ENCODE measurements at regions of chr11 and their contacts with region 1.

Region 1: GRCh38 chr11:70202898-70203748 is at the start of gene FADD:
- DNase-seq: peak; percentile 95
- H3K4me3 Mint-ChIP-seq: peak within 1 kb of the TSS; percentile 96
- H3K27ac Mint-ChIP-seq: peak within 1 kb of the TSS; percentile 99
- H3K4me1 Mint-ChIP-seq: peaks cover 37% of the 10 kb centered on the region
- H3K27me3 Mint-ChIP-seq: peaks cover 2% of the 10 kb centered on the region
- total RNA-seq, gene FADD: 31.8 to 33.9 TPM

Region 2: DNA sequence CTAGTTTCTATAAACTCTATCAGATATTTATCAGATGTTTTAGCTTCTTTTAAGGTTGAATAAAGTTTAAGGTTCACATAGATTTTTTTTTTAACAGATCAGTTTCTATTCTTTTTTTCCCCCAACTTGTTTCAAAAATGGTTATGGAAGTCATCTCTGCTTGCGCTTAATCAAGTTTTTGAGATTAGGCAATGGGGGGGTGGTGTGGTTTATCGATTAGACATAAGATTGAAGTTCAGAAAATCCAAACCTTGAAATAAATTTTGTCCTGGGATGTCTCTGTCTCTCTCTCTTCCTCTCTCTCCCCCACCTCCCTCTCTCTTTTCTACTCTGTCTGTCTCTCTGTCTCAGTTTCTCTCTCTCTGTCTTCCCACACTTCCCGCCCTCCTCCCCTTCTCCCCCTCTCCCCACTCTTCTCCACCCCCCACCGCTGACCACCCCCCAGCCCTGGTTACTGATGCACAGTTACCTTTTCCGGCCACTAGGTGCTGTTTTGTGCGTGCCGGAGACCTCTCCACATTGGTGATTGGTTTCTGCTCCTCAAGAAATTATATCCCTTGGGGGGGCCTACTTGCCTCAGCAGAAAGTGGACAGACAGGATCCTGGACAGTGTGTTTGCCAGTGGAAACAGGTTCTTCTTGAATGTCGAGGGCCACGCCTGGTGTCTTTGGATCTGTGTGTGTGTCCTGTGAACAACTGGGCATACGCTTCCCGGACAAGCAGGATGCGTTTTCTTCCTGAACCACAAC is 154.7 kb before region 1 on chr11:
- CTCF ChIA-PET with region 1: no interaction called
- POLR2A ChIA-PET with region 1: no interaction called
- intact Hi-C with region 1: no loop called
- DNase-seq: no peak
- H3K4me3 Mint-ChIP-seq: no peak overlapping the region
- H3K27ac Mint-ChIP-seq: no peak overlapping the region
- H3K4me1 Mint-ChIP-seq: no peaks in the 10 kb centered on the region
- H3K27me3 Mint-ChIP-seq: peaks cover 35% of the 10 kb centered on the region

Region 3: GRCh38 chr11:70141486-70142220 is 61.5 kb before region 1 on chr11:
- CTCF ChIA-PET with region 1: no interaction called
- POLR2A ChIA-PET with region 1: no interaction called
- intact Hi-C with region 1: no loop called
- DNase-seq: peak; percentile 26
- H3K4me3 Mint-ChIP-seq: no peak overlapping the region
- H3K27ac Mint-ChIP-seq: no peak overlapping the region
- H3K4me1 Mint-ChIP-seq: no peaks in the 10 kb centered on the region
- H3K27me3 Mint-ChIP-seq: peaks cover 30% of the 10 kb centered on the region

Region 4: GRCh38 chr11:70270104-70270876 is 67.2 kb after region 1 on chr11 and contains the start of gene PPFIA1:
- CTCF ChIA-PET with region 1: interaction called, 7 read pairs
- POLR2A ChIA-PET with region 1: interaction called, 4 read pairs
- intact Hi-C with region 1: loop called (anchors 1 kb)
- DNase-seq: peak; percentile 95
- H3K4me3 Mint-ChIP-seq: peak within 1 kb of the TSS; percentile 88
- H3K27ac Mint-ChIP-seq: peak within 1 kb of the TSS; percentile 16
- H3K4me1 Mint-ChIP-seq: peaks cover 41% of the 10 kb centered on the region
- H3K27me3 Mint-ChIP-seq: peaks cover 12% of the 10 kb centered on the region
- total RNA-seq, gene PPFIA1: 23.1 to 26.7 TPM

Measured in activated CD4-positive, alpha-beta memory T cell treated with anti-CD3 and anti-CD28 coated beads for 36 hours (primary cell).